Astrocyte of the cerebellum (primary cell): ENCODE measurements at regions of chr12 and their contacts with region 1.

Region 1: GRCh38 chr12:10623131-10623530 is 9.7 kb upstream of the MAGOHB start:
- DNase-seq: no peak
- H3K4me3 ChIP-seq: no peak overlapping the region
- CTCF ChIP-seq: no peak

Region 2: GRCh38 chr12:10661338-10661737 is 38.2 kb after region 1 on chr12:
- in situ Hi-C with region 1: loop called (anchors 5 kb)
- DNase-seq: no peak
- H3K4me3 ChIP-seq: no peak overlapping the region
- CTCF ChIP-seq: no peak

Region 3: GRCh38 chr12:10721651-10722501 is 98.7 kb after region 1 on chr12:
- in situ Hi-C with region 1: no loop called
- DNase-seq: peak; percentile 94
- H3K4me3 ChIP-seq: peak overlapping the region; percentile 73
- CTCF ChIP-seq: no peak

Region 4: DNA sequence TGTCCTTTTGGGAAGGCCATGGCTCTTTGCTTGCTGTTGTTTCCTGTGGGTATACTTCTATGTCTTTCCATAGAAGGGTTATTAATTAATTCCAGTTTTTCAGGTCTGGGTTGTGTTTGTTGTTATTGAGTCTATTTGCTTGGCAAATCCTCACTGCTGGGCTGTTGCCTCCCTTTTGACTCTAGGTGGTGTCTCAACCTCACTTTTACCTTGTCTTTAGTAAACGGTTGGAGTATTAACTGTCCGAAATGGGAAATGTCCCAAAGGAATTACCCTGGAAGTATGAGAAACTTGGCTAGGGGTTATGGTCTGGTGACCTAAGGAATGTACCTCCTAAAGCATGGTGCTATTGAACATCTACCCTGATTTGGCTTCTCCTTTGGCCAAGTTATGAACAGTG is 244.2 kb after region 1 on chr12:
- in situ Hi-C with region 1: no loop called
- DNase-seq: no peak
- H3K4me3 ChIP-seq: no peak overlapping the region
- CTCF ChIP-seq: no peak